Naive thymus-derived CD4-positive, alpha-beta T cell (primary cell): ENCODE measurements at regions of chr6 and their contacts with region 1.

Region 1: DNA sequence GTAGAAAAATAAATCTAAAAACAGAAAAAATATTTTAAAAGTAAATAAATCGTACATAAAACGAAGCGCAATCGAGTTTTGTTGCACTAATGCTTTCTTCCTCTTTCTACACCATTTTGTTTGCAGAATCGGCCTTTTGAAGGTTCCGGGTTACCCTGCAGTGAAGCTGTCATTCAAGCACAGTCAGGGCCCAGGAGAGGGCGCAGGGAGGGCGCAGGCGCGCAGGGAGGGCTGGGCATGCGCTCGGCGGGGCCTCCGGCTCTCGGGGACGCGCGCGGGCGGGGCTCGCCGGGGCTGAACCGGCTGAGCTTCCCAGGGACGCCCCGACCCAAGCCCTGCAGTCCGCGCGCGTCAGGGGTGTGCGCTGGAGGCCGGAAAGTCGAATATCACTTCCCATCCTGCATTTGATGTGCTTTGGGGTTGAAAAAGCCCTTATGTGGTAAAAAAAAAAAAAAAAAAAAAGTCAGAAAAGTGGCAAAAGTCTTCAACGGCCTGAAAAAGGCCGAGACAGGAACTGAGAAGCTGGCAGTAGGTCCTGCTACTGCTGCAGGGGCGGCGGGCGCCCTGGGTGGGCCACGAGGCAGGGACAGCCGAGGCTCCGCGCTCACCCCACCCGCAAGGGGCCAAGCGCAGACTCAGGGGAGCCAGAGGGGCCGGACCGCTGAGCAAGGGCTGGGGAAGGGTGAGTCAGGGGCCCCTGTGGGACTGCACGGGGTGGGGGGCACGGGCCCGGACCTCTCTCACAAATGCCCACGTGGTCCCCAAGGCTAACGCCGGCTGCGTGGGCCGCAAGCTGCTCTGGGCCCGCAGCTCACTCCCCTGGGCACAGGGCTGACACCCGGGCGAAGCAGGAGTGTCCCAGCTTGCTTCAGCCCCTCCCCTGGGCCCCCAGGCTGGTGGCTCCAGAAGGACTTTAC is 40.5 kb downstream of the THBS2 start:
- DNase-seq: peak; percentile 82 to 94 (median 91)
- ATAC-seq: peak; percentile 99
- H3K4me3 ChIP-seq: peak overlapping the region; percentile 13
- H3K4me3 Mint-ChIP-seq: peak overlapping the region; percentile 53 to 82 (median 68)
- H3K27ac ChIP-seq: peak overlapping the region; percentile 56
- H3K27ac Mint-ChIP-seq: peak overlapping the region; percentile 53 to 90 (median 81)
- H3K4me1 ChIP-seq: peaks cover 4 to 8% of the 10 kb centered on the region in 2 donors
- H3K4me1 Mint-ChIP-seq: peaks cover 0 to 30% (median 16%) of the 10 kb centered on the region in 7 donors
- H3K27me3 ChIP-seq: no peaks in the 10 kb centered on the region
- H3K27me3 Mint-ChIP-seq: peaks cover 0 to 4% (median 0%) of the 10 kb centered on the region in 5 donors

Region 2: GRCh38 chr6:167826230-167826895 is 1386.8 kb before region 1 on chr6:
- CTCF ChIA-PET with region 1: no interaction called
- POLR2A ChIA-PET with region 1: no interaction called
- intact Hi-C with region 1: loop called in 1 of 2 experiments (anchors 5 kb)
- DNase-seq: peak; percentile 11 to 73 (median 55)
- ATAC-seq: peak; percentile 97
- H3K4me3 ChIP-seq: peak overlapping the region; percentile 66
- H3K4me3 Mint-ChIP-seq: peak overlapping the region; percentile 83 to 91 (median 85)
- H3K27ac ChIP-seq: no peak overlapping the region
- H3K27ac Mint-ChIP-seq: peak overlapping the region in 4 of 9 donors; percentile 44 to 69 (median 60)
- H3K4me1 ChIP-seq: peaks cover 0 to 14% of the 10 kb centered on the region in 2 donors
- H3K4me1 Mint-ChIP-seq: peaks cover 5 to 43% (median 26%) of the 10 kb centered on the region in 7 donors
- H3K27me3 ChIP-seq: peaks cover 0 to 27% of the 10 kb centered on the region in 2 donors
- H3K27me3 Mint-ChIP-seq: peaks cover 49 to 81% (median 69%) of the 10 kb centered on the region in 5 donors

Region 3: GRCh38 chr6:169188475-169188874 is 24.7 kb before region 1 on chr6:
- CTCF ChIA-PET with region 1: no interaction called
- POLR2A ChIA-PET with region 1: no interaction called
- intact Hi-C with region 1: no loop called
- DNase-seq: no peak
- ATAC-seq: no peak
- H3K4me3 ChIP-seq: no peak overlapping the region
- H3K4me3 Mint-ChIP-seq: no peak overlapping the region
- H3K27ac ChIP-seq: no peak overlapping the region
- H3K27ac Mint-ChIP-seq: no peak overlapping the region
- H3K4me1 ChIP-seq: no peaks in the 10 kb centered on the region
- H3K4me1 Mint-ChIP-seq: no peaks in the 10 kb centered on the region
- H3K27me3 ChIP-seq: no peaks in the 10 kb centered on the region
- H3K27me3 Mint-ChIP-seq: peaks cover 0 to 17% (median 9%) of the 10 kb centered on the region in 5 donors

Region 4: GRCh38 chr6:169654598-169655391 is 441.6 kb after region 1 on chr6:
- CTCF ChIA-PET with region 1: no interaction called
- POLR2A ChIA-PET with region 1: no interaction called
- intact Hi-C with region 1: loop called in 1 of 2 experiments (anchors 1 kb)
- DNase-seq: peak; percentile 59 to 86 (median 73)
- ATAC-seq: peak; percentile 99
- H3K4me3 ChIP-seq: peak overlapping the region; percentile 64
- H3K4me3 Mint-ChIP-seq: peak overlapping the region; percentile 86 to 95 (median 92)
- H3K27ac ChIP-seq: peak overlapping the region; percentile 72
- H3K27ac Mint-ChIP-seq: peak overlapping the region; percentile 71 to 95 (median 89)
- H3K4me1 ChIP-seq: no peaks in the 10 kb centered on the region
- H3K4me1 Mint-ChIP-seq: peaks cover 0 to 19% (median 15%) of the 10 kb centered on the region in 7 donors
- H3K27me3 ChIP-seq: no peaks in the 10 kb centered on the region
- H3K27me3 Mint-ChIP-seq: no peaks in the 10 kb centered on the region

Region 5: DNA sequence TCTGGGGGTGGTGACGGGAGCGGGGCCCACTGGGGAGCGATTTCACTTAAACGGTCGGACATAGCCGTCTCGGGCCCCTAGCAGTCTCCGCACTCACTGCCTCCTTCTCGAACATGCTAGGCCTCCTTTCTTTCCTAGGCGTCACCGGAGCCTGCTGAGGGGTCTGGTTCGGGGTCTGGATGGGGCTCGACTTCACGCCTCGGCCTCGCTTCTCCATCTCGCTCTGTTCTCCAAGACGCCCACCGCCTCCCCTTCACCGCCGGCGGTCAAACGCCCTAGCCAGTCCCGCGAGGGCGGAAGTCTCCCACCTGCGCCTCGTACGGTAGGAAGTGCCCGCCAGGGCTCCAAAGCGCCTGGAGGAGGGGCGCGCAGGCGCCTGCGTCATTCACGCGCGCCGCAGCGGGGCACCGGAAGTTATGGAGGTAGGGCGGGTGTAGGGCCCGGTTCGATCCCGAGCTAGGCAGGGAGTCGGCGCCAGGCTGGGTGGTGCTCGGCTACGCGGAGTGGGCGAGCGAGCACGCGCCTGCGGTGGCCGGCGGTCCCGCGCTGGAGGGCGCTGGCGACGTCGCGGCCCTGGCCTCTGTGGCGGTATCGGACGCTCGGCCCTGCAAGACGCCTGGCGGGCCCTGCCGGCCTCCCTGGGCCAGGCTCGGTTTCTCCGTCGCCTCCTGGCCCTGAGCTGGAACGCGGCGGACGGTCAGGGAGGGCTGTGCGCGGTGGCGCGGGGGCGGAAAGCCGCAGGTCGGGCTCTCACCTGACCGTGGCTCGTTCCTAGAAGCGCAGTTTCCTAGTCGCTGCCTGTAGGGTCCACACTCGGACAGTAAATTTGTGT is 538.3 kb after region 1 on chr6 and contains the starts of genes DYNLT2 and ERMARD:
- CTCF ChIA-PET with region 1: no interaction called
- POLR2A ChIA-PET with region 1: interaction called, 4 read pairs
- intact Hi-C with region 1: loop called in 1 of 2 experiments (anchors 5 kb)
- DNase-seq: peak; percentile 89 to 97 (median 94)
- ATAC-seq: peak; percentile 98
- H3K4me3 ChIP-seq: peak within 1 kb of the TSS; percentile 84
- H3K4me3 Mint-ChIP-seq: peak within 1 kb of the TSS; percentile 92 to 100 (median 98)
- H3K27ac ChIP-seq: peak within 1 kb of the TSS; percentile 92
- H3K27ac Mint-ChIP-seq: peak within 1 kb of the TSS; percentile 96 to 100 (median 100)
- H3K4me1 ChIP-seq: peaks cover 17% of the 10 kb centered on the region in 2 donors
- H3K4me1 Mint-ChIP-seq: peaks cover 21 to 43% (median 37%) of the 10 kb centered on the region in 7 donors
- H3K27me3 ChIP-seq: no peaks in the 10 kb centered on the region
- H3K27me3 Mint-ChIP-seq: peaks cover 0 to 4% (median 0%) of the 10 kb centered on the region in 5 donors
- total RNA-seq, gene DYNLT2: 2.5 to 4.7 (median 4.1) TPM
- total RNA-seq, gene ERMARD: 30.3 to 43.7 (median 35.7) TPM

Region 6: GRCh38 chr6:170584181-170584953 is 1371.2 kb after region 1 on chr6 and contains the start of gene PDCD2:
- CTCF ChIA-PET with region 1: no interaction called
- POLR2A ChIA-PET with region 1: interaction called, 3 read pairs
- intact Hi-C with region 1: loop called in 1 of 2 experiments (anchors 5 kb)
- DNase-seq: peak; percentile 82 to 92 (median 91)
- ATAC-seq: peak; percentile 96
- H3K4me3 ChIP-seq: peak within 1 kb of the TSS; percentile 89
- H3K4me3 Mint-ChIP-seq: peak within 1 kb of the TSS; percentile 96 to 100 (median 97)
- H3K27ac ChIP-seq: peak within 1 kb of the TSS; percentile 88
- H3K27ac Mint-ChIP-seq: peak within 1 kb of the TSS; percentile 94 to 99 (median 96)
- H3K4me1 ChIP-seq: peaks cover 8 to 11% of the 10 kb centered on the region in 2 donors
- H3K4me1 Mint-ChIP-seq: peaks cover 14 to 42% (median 37%) of the 10 kb centered on the region in 7 donors
- H3K27me3 ChIP-seq: no peaks in the 10 kb centered on the region
- H3K27me3 Mint-ChIP-seq: peaks cover 0 to 4% (median 0%) of the 10 kb centered on the region in 5 donors
- total RNA-seq, gene PDCD2: 49.4 to 80.1 (median 76.1) TPM